Activated CD4-positive, alpha-beta memory T cell treated with anti-CD3 and anti-CD28 coated beads, Interleukin-2, amount 10 ng/mL, durations not matched to agents 7 days and 5 days (primary cell): ENCODE measurements at regions of chr3 and their contacts with region 1.

Region 1: DNA sequence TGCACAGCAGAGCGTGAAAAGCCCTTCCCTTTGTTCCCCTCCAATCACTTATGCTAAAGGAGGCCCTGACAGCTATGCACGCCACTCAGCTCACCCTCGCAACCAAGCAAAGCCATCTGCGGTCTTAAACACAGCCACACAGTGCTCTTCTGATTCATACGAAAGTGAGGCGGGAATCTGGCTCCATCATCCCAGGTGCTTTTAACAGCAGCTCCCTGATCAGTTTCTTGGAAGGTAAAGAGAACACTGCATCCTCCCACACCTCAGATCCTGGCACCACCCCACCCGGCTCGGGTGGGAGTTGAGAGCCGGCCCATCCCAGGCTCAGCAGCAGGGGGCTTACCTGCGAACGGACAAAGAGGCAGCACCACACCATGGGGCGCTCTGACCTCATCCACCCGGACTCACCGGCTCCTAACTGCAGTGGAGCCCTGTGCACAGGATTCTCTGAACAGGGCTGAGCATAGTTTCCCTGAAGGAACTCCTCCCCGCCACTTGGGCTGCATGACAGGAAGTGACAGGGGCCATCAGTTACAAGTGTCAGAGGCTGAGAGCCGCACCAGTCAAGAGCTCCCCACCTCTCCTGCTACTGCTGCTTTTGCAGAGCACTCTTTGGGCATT is 114.3 kb upstream of the ARHGEF3 start:
- DNase-seq: peak; percentile 87
- H3K4me3 Mint-ChIP-seq: peak overlapping the region; percentile 97
- H3K27ac Mint-ChIP-seq: peak overlapping the region; percentile 100
- H3K4me1 Mint-ChIP-seq: peaks cover 62% of the 10 kb centered on the region
- H3K27me3 Mint-ChIP-seq: no peaks in the 10 kb centered on the region

Region 2: GRCh38 chr3:56682462-56683121 is 233.5 kb before region 1 on chr3:
- CTCF ChIA-PET with region 1: interaction called, 3 read pairs
- POLR2A ChIA-PET with region 1: interaction called, 33 read pairs
- DNase-seq: peak; percentile 80
- H3K4me3 Mint-ChIP-seq: peak overlapping the region; percentile 98
- H3K27ac Mint-ChIP-seq: peak overlapping the region; percentile 97
- H3K4me1 Mint-ChIP-seq: peaks cover 50% of the 10 kb centered on the region
- H3K27me3 Mint-ChIP-seq: no peaks in the 10 kb centered on the region

Region 3: DNA sequence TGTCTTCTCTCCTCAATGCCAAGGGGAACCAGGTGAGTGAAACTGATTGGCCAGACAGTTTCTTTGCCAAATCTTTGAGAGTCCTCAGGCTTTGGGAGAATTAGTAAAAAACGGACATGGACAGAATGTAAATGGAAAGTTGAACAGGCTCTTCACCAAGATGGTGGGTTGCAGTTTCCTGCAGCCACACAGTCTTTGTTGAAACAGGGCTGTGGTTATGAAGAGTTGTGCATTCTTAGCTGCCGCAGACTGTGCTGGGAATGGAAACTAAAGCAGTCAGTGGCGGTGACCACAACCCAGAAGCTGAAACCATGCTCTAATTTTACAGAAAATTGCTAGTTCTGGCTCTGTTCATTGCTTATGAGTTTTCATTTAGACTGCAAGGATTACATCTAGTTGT is 190.9 kb before region 1 on chr3:
- CTCF ChIA-PET with region 1: interaction called, 3 read pairs
- POLR2A ChIA-PET with region 1: interaction called, 10 read pairs
- DNase-seq: peak; percentile 82
- H3K4me3 Mint-ChIP-seq: peak overlapping the region; percentile 49
- H3K27ac Mint-ChIP-seq: peak overlapping the region; percentile 83
- H3K4me1 Mint-ChIP-seq: peaks cover 34% of the 10 kb centered on the region
- H3K27me3 Mint-ChIP-seq: no peaks in the 10 kb centered on the region

Region 4: GRCh38 chr3:56783644-56784447 is 132.2 kb before region 1 on chr3:
- CTCF ChIA-PET with region 1: interaction called, 6 read pairs
- POLR2A ChIA-PET with region 1: interaction called, 38 read pairs
- DNase-seq: peak; percentile 81
- H3K4me3 Mint-ChIP-seq: peak overlapping the region; percentile 57
- H3K27ac Mint-ChIP-seq: peak overlapping the region; percentile 96
- H3K4me1 Mint-ChIP-seq: peaks cover 89% of the 10 kb centered on the region
- H3K27me3 Mint-ChIP-seq: no peaks in the 10 kb centered on the region

Region 5: GRCh38 chr3:56812754-56813650 is 103.1 kb before region 1 on chr3:
- CTCF ChIA-PET with region 1: no interaction called
- POLR2A ChIA-PET with region 1: interaction called, 12 read pairs
- DNase-seq: no peak
- H3K4me3 Mint-ChIP-seq: no peak overlapping the region
- H3K27ac Mint-ChIP-seq: peak overlapping the region; percentile 17
- H3K4me1 Mint-ChIP-seq: peaks cover 35% of the 10 kb centered on the region
- H3K27me3 Mint-ChIP-seq: no peaks in the 10 kb centered on the region

Region 6: DNA sequence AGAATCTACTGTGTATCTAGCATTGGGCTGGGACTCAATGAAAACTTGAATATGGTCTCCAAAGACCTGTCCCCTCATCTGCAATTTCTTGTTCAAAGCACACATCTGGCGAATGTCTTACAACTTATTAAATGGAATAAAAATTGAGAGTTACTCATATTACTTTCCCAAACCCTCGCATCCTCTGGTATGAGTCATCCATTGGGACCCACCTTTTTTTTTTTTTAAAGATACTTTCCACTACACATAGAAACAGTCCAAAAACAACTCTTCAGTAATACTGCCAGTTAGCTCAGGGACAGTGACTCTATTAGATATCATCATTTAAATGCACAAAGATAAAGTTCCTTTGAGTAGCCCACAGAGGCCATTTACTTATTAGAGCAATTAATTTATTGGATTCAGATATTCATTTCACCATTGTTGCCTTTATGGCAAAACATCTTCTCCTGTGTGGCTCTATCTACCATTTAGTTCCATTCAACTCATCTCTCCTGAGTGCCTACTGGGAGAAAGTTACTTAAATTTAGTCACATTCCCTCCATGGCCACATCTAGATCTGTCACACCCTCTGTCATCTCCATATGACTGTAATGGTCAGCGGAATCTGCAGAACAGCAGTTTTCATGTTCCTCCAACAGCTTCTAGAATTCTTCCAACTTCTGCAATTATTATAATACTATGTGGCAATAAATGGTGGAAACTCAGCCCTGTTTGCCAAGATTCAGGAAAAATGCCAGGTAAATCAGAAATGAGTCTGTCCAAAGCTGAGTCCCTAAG is 36.5 kb before region 1 on chr3:
- CTCF ChIA-PET with region 1: no interaction called
- POLR2A ChIA-PET with region 1: interaction called, 34 read pairs
- DNase-seq: no peak
- H3K4me3 Mint-ChIP-seq: no peak overlapping the region
- H3K27ac Mint-ChIP-seq: no peak overlapping the region
- H3K4me1 Mint-ChIP-seq: peaks cover 49% of the 10 kb centered on the region
- H3K27me3 Mint-ChIP-seq: no peaks in the 10 kb centered on the region

Region 7: GRCh38 chr3:56904552-56905215 is 11.4 kb before region 1 on chr3:
- CTCF ChIA-PET with region 1: interaction called, 7 read pairs
- POLR2A ChIA-PET with region 1: interaction called, 16 read pairs
- DNase-seq: no peak
- H3K4me3 Mint-ChIP-seq: no peak overlapping the region
- H3K27ac Mint-ChIP-seq: no peak overlapping the region
- H3K4me1 Mint-ChIP-seq: peaks cover 30% of the 10 kb centered on the region
- H3K27me3 Mint-ChIP-seq: no peaks in the 10 kb centered on the region

Region 8: GRCh38 chr3:57141719-57142410 is 225.8 kb after region 1 on chr3:
- CTCF ChIA-PET with region 1: no interaction called
- POLR2A ChIA-PET with region 1: no interaction called
- DNase-seq: no peak
- H3K4me3 Mint-ChIP-seq: no peak overlapping the region
- H3K27ac Mint-ChIP-seq: no peak overlapping the region
- H3K4me1 Mint-ChIP-seq: no peaks in the 10 kb centered on the region
- H3K27me3 Mint-ChIP-seq: peaks cover 45% of the 10 kb centered on the region